ENCODE measurements at regions of chr9 and their contacts with region 1.

Region 1: DNA sequence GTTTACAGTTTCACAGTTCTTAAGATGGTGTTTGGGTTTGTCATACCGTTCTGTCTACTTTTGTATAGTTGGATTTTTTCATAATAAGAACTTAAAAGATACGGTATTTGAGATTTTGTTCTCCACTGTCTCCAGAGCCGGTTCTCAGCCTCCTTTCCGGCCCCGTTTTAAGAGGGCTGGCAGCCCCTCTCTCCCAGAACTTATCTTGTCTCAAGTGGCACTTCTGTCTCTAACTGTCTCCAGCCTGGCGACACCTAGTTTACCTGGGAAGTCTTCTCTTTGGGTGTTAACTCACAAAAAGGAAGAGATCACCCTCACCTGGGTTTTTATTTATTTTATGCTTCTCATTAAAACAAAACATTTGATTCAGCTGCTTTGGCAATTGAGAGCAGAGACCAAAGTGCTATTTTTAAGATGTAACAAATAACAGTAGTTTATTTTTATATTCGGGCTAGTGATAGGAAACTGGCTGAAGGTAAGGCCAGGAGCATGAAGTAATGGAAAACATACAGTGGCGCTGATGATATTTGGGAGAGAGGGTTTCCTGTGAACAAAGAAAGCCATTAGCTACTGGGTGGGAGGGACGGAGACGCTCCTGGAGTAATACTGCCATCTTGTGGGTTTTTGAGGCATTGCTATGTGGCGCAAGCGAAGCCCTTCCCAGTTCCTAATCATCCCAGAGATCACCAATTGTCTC is 48.3 kb downstream of the ACER2 start:
- DNase-seq: peak; percentile 65
- ATAC-seq: peak; percentile 98
- H3K4me3 ChIP-seq: no peak overlapping the region
- H3K27ac ChIP-seq: no peak overlapping the region
- H3K4me1 ChIP-seq: peaks cover 0 to 4% of the 10 kb centered on the region in 2 experiments; a peak in 2 of 4 replicates
- H3K27me3 ChIP-seq: no peaks in the 10 kb centered on the region
- CTCF ChIP-seq: peak; percentile 71 to 91 (median 89); a peak in 5 of 6 replicates
- POLR2A ChIP-seq: no peak
- RAD21 ChIP-seq: peak; percentile 95

Region 2: GRCh38 chr9:17531642-17532254 is 1925.4 kb before region 1 on chr9:
- CTCF ChIA-PET with region 1: interaction called, 4 read pairs
- POLR2A ChIA-PET with region 1: no interaction called
- RAD21 ChIA-PET with region 1: no interaction called
- intact Hi-C with region 1: loop called (anchors 5 kb)
- DNase-seq: peak; percentile 10
- ATAC-seq: peak; percentile 65; the same call in 1 of the 2 replicates
- H3K4me3 ChIP-seq: no peak overlapping the region
- H3K27ac ChIP-seq: no peak overlapping the region
- H3K4me1 ChIP-seq: no peaks in the 10 kb centered on the region
- H3K27me3 ChIP-seq: no peaks in the 10 kb centered on the region
- CTCF ChIP-seq: peak; percentile 48 to 65 (median 62)
- POLR2A ChIP-seq: no peak
- RAD21 ChIP-seq: peak; percentile 64

Region 3: DNA sequence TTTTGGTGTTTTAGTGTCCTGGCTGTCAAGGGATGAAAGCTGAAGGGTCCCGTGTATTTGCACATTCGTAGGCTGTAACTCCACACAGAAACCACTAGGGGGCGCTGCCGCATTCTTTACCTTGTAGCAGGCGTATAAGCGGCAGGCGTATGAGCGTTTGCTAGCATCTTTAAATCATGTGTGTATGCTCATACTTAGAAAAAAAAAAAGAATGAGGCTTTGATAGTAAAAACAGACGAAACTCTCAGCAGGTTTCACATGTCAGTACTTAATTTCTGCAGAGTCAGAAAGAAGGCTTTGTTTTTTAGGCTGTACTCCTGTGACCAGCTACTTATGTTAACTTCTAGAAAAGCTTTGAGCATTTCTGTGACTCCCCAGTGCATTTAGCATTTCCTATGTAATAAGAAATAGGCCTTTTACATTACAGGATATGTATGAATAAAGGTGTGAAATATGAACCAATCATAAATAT is 1202.0 kb before region 1 on chr9:
- CTCF ChIA-PET with region 1: interaction called, 3 read pairs
- POLR2A ChIA-PET with region 1: no interaction called
- RAD21 ChIA-PET with region 1: no interaction called
- intact Hi-C with region 1: loop called (anchors 2 kb)
- DNase-seq: peak; percentile 48
- ATAC-seq: peak; percentile 83
- H3K4me3 ChIP-seq: no peak overlapping the region
- H3K27ac ChIP-seq: no peak overlapping the region
- H3K4me1 ChIP-seq: no peaks in the 10 kb centered on the region
- H3K27me3 ChIP-seq: no peaks in the 10 kb centered on the region
- CTCF ChIP-seq: peak; percentile 53 to 89 (median 82); a peak in 5 of 6 replicates
- POLR2A ChIP-seq: no peak
- RAD21 ChIP-seq: peak; percentile 68

Region 4: DNA sequence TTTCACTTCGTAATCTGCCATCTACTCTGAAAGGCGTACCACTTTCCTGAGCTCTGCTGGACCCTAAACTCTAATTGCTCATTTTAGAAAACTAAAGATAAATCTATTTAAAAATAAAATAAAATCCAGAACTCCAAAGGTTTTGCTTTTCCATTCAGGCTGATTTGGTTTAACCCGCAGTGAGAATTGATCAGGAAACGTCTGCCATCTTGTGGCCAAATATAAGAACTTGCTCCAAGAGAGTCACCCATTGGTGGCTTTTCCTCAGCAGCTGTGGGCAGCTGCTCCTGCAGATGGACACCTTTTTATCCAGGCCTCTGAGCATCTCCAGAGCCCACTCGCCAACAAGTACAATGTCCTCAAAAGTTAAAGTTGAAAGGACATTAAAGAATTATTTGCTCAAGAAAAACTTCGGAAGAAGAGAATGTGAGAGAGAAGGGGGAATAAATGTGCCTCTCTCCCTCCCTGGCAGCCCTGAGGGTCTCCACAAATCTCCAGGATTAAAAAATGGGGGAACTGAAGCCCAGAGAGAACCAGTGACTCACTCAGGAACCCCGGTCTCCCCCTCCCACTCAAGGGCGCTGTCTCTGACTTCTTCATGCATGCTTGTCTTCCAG is 428.2 kb before region 1 on chr9:
- CTCF ChIA-PET with region 1: interaction called, 9 read pairs
- POLR2A ChIA-PET with region 1: no interaction called
- RAD21 ChIA-PET with region 1: no interaction called
- intact Hi-C with region 1: loop called (anchors 5 kb)
- DNase-seq: peak; percentile 52
- ATAC-seq: peak; percentile 92
- H3K4me3 ChIP-seq: no peak overlapping the region
- H3K27ac ChIP-seq: no peak overlapping the region
- H3K4me1 ChIP-seq: no peaks in the 10 kb centered on the region
- H3K27me3 ChIP-seq: no peaks in the 10 kb centered on the region
- CTCF ChIP-seq: peak; percentile 55 to 64 (median 61); a peak in 5 of 6 replicates
- POLR2A ChIP-seq: no peak
- RAD21 ChIP-seq: peak; percentile 72

Region 5: DNA sequence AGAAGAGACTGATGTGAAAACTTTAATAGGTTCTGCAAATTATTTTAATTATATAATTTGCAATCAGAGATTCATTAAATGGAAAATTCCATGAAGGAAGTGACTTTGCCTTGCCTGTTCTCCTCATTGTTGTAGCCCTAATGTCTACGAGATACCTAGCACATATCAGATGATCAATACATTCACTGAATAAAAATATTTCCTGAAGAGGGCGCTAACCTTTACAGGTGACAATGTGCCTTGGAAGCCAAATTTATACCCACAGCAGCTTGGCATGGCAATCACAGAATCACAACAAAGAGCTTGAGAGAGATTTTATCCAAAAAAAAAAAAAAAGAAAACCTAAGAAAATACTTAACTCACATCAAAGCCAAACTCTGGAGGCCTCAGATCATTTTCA is 371.8 kb before region 1 on chr9:
- CTCF ChIA-PET with region 1: interaction called, 4 read pairs
- POLR2A ChIA-PET with region 1: no interaction called
- RAD21 ChIA-PET with region 1: interaction called in 1 of 2 experiments, 6 read pairs
- intact Hi-C with region 1: loop called (anchors 1 kb)
- DNase-seq: peak; percentile 22
- ATAC-seq: peak; percentile 79
- H3K4me3 ChIP-seq: no peak overlapping the region
- H3K27ac ChIP-seq: no peak overlapping the region
- H3K4me1 ChIP-seq: no peaks in the 10 kb centered on the region
- H3K27me3 ChIP-seq: no peaks in the 10 kb centered on the region
- CTCF ChIP-seq: peak; percentile 34 to 66 (median 43); a peak in 4 of 6 replicates
- POLR2A ChIP-seq: no peak
- RAD21 ChIP-seq: peak; percentile 55

Region 6: GRCh38 chr9:19371942-19372341 is 85.2 kb before region 1 on chr9:
- CTCF ChIA-PET with region 1: no interaction called
- POLR2A ChIA-PET with region 1: no interaction called
- RAD21 ChIA-PET with region 1: no interaction called
- intact Hi-C with region 1: loop called (anchors 5 kb)
- DNase-seq: no peak
- ATAC-seq: 0 out of 2 replicates have a peak, but pooled peaks have one; percentile 44
- H3K4me3 ChIP-seq: no peak overlapping the region
- H3K27ac ChIP-seq: no peak overlapping the region
- H3K4me1 ChIP-seq: no peaks in the 10 kb centered on the region
- H3K27me3 ChIP-seq: no peaks in the 10 kb centered on the region
- CTCF ChIP-seq: peak in 1 of 3 experiments; percentile 21; a peak in 1 of 6 replicates
- POLR2A ChIP-seq: no peak
- RAD21 ChIP-seq: peak; percentile 9; the same call in 1 of the 2 replicates